SK-N-SH (cell line): ENCODE measurements at regions of chr13 and their contacts with region 1.

Region 1: DNA sequence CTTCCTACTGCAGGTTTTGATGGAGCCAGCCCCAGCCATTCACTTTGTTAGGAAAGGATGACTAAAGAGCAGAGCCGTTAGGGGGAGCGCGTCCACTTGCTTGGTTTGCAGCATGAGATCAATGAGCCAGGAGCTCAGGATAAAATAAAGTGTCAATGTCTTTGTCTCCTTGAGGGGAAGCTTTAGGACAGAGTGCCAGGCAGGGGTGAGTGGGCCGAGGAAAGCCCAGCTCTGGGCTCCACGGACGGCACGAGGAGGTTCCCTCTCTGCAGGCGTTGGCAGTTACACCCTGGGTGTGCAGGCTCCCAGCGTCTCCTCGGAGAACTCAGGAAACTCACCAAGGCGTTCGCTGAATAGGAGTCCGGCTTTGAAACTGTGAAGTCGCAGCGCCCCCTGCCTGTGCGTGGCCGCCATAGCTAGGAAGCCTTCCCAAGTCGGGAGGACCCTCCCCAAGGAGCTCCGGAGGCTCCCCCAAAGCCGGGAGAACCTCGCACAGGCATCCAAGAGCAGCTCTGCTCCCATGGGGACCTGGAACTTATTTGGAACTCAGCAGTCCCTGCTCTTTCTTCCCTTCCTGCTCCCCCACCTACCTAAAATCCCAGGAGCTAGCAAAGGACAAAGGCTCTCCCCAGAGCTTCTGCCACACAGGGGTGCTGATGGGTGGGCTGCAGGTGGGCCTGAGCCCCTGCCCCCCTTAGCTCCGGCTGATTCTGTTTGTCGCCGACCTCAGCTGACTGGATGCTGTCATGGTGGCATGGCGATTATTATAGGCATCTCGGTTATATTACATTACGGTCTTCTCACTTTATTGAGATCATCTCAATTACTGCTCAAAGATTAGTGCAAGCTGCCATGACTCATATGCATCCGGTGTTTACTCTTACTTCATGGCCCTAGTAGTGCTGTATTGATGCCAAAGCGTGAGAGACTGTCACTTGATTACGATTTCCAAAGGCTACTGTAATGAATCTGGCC is 34.4 kb downstream of the GSX1 start:
- DNase-seq: peak; percentile 82
- H3K4me3 ChIP-seq: peak overlapping the region; percentile 29 to 58
- H3K27ac ChIP-seq: no peak overlapping the region
- H3K4me1 ChIP-seq: peaks cover 0 to 2% of the 10 kb centered on the region in 2 experiments; a peak in 1 of 4 replicates
- H3K27me3 ChIP-seq: peaks cover 46% of the 10 kb centered on the region
- CTCF ChIP-seq: peak; percentile 92
- EP300 ChIP-seq: no peak
- RAD21 ChIP-seq: peak; percentile 90

Region 2: GRCh38 chr13:26985285-26985878 is 841.3 kb before region 1 on chr13:
- CTCF ChIA-PET with region 1: interaction called, 16 read pairs
- POLR2A ChIA-PET with region 1: no interaction called
- DNase-seq: peak; percentile 72
- H3K4me3 ChIP-seq: no peak overlapping the region; a peak in 1 of 4 replicates
- H3K27ac ChIP-seq: no peak overlapping the region
- H3K4me1 ChIP-seq: peaks cover 0 to 8% of the 10 kb centered on the region in 2 experiments; a peak in 2 of 4 replicates
- H3K27me3 ChIP-seq: no peaks in the 10 kb centered on the region
- CTCF ChIP-seq: peak; percentile 84
- EP300 ChIP-seq: no peak
- RAD21 ChIP-seq: peak; percentile 98

Region 3: GRCh38 chr13:27396252-27396846 is 430.3 kb before region 1 on chr13:
- CTCF ChIA-PET with region 1: interaction called, 12 read pairs
- POLR2A ChIA-PET with region 1: no interaction called
- DNase-seq: no peak
- H3K4me3 ChIP-seq: no peak overlapping the region
- H3K27ac ChIP-seq: no peak overlapping the region
- H3K4me1 ChIP-seq: no peaks in the 10 kb centered on the region; a peak in 1 of 4 replicates
- H3K27me3 ChIP-seq: peaks cover 47% of the 10 kb centered on the region; the same call in 1 of the 2 replicates
- CTCF ChIP-seq: no peak
- EP300 ChIP-seq: no peak
- RAD21 ChIP-seq: no peak

Region 4: DNA sequence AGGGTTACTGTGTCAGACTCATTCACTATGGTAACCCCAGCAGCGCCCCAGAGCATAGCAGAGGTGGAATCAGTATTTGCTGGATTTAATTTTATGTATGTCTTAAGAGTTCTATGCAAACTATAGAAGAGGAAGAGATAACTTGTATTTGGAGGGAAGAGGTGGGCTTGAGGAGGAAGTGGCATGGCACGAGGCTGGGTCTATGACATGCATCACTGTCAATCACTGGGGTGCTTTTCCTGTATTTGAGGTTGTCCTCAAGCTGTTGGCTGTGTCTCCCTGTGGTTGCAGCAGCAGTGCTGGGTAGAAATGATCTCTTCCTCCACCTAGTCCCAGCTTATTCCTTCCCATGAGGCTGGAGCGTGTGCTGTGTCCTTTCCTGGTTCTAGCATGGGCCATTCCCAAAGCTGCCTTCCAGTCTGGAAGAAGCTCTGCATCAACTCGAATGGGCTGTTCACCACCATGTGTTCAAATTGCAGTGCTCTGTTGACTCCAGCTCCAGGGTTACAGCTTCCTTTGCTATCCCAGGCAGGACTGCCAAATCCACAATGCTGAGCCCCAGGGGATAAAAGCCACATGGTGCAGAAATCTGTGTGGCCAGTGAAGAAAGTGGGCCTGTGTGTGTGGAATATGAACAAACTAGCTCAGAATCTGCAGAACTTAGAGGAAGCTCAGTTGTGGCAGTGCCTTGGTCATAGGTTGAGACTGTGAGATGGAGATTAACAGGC is 303.2 kb before region 1 on chr13:
- CTCF ChIA-PET with region 1: interaction called, 18 read pairs
- POLR2A ChIA-PET with region 1: no interaction called
- DNase-seq: no peak
- H3K4me3 ChIP-seq: no peak overlapping the region
- H3K27ac ChIP-seq: no peak overlapping the region
- H3K4me1 ChIP-seq: no peaks in the 10 kb centered on the region
- H3K27me3 ChIP-seq: peaks cover 66% of the 10 kb centered on the region; the same call in 1 of the 2 replicates
- CTCF ChIP-seq: no peak
- EP300 ChIP-seq: no peak
- RAD21 ChIP-seq: no peak

Region 5: DNA sequence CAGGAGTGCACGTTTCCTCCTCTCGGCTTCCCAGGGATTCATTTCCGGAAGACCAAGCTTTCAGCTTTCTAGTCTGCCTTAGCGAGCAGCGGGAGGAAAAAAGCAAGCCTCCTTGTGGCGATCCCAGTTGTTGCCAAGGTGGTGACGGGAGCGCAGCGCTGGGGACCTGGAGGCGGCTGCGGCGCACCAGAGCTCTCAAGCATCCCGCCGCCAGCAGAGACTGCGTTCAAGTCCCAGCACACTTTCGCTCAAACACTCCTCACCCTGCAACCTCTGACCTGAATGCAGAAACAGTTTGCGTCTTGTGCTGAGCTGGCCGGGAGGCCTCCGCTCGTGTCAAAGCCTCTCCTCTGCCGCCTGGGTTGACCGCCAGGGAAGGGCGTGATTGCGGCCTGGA is 29.4 kb before region 1 on chr13:
- CTCF ChIA-PET with region 1: interaction called, 10 read pairs
- POLR2A ChIA-PET with region 1: no interaction called
- DNase-seq: no peak
- H3K4me3 ChIP-seq: no peak overlapping the region; a peak in 1 of 4 replicates
- H3K27ac ChIP-seq: no peak overlapping the region
- H3K4me1 ChIP-seq: no peaks in the 10 kb centered on the region
- H3K27me3 ChIP-seq: peaks cover 75% of the 10 kb centered on the region
- CTCF ChIP-seq: peak; percentile 22; the same call in 1 of the 2 replicates
- EP300 ChIP-seq: no peak
- RAD21 ChIP-seq: no peak

Region 6: DNA sequence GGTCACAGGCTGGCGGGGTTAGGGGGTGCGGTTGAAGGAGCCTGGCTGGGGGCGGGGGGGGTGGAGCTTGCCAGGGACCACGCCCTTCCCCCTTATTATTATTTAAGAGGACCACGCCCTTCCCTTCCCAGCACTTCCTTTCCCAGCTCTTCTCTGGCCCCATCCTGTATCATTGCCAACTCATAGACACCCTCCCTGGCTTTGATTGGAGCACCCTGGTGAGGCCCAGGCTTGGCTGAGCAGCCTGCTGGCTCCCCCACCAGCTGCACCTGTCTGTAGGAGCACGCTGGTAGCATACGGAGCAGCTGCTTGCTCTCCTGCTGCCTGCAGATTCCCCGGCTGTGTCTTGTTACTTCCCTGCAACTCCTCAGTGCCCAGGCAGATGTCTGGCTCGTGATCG is 30.6 kb after region 1 on chr13:
- CTCF ChIA-PET with region 1: interaction called, 13 read pairs
- POLR2A ChIA-PET with region 1: no interaction called
- DNase-seq: no peak
- H3K4me3 ChIP-seq: no peak overlapping the region
- H3K27ac ChIP-seq: no peak overlapping the region
- H3K4me1 ChIP-seq: no peaks in the 10 kb centered on the region
- H3K27me3 ChIP-seq: peaks cover 48% of the 10 kb centered on the region; the same call in 1 of the 2 replicates
- CTCF ChIP-seq: no peak
- EP300 ChIP-seq: no peak
- RAD21 ChIP-seq: no peak

Region 7: DNA sequence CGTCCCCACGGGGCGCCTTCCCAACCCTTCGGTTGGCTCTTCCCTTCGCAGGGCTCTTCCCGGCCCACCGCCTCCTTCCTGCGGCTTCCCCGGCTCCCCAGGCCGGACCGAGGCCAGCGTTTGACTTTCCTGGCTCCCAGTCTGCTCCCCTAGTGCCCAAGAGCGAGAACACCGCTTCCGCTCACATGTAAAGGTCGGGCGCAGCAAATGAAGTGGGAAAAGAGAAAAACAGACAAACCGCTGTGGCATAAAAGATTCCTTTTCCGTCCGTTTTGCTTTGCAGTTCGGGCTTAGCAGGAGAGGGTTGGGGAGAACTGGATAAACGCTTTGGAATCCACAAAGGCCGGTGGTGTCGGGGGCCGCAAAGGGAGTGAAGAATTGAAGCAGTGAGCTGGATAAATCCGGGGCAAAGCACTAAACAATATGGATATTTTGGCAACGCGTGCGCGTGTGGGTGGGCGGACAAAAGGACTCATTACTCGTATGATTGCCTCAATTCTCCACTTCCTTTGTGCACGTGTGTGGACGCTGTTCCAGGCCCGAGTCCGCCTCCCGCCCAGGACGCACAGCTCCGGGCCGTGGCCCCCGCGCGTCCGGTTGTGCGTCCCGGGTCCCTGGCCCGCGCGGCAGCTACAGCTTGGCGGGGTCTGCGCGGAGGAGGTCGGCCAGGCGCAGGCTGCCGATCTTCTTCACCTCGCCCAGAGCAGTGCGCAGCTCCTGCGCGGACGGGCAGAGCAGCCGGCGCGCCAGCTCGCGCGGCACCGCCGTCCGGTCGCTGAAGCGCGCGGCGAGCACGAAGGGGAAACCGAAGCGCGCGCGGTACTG is 151.0 kb after region 1 on chr13:
- CTCF ChIA-PET with region 1: interaction called, 185 read pairs
- POLR2A ChIA-PET with region 1: no interaction called
- DNase-seq: no peak
- H3K4me3 ChIP-seq: no peak overlapping the region
- H3K27ac ChIP-seq: no peak overlapping the region
- H3K4me1 ChIP-seq: no peaks in the 10 kb centered on the region
- H3K27me3 ChIP-seq: peaks cover 98% of the 10 kb centered on the region
- CTCF ChIP-seq: no peak
- EP300 ChIP-seq: no peak
- RAD21 ChIP-seq: no peak